ENCODE measurements at regions of chr14 and their contacts with region 1.

Region 1: GRCh38 chr14:74618078-74618952 is 6.3 kb upstream of the LTBP2 start:
- DNase-seq: no peak
- ATAC-seq: no peak
- H3K4me3 ChIP-seq: 0 out of 4 replicates have a peak overlapping the region, but pooled peaks of 1 of the 2 experiments have one; percentile 1
- H3K27ac ChIP-seq: peak overlapping the region; percentile 95
- H3K4me1 ChIP-seq: peaks cover 87% of the 10 kb centered on the region
- H3K27me3 ChIP-seq: no peaks in the 10 kb centered on the region
- CTCF ChIP-seq: no peak

Region 2: GRCh38 chr14:74571901-74572725 is 46.2 kb before region 1 on chr14:
- CTCF ChIA-PET with region 1: no interaction called
- POLR2A ChIA-PET with region 1: no interaction called
- in situ Hi-C with region 1: no loop called
- intact Hi-C with region 1: no loop called
- DNase-seq: peak; percentile 75
- ATAC-seq: peak; percentile 36; the same call in 1 of the 2 replicates
- H3K4me3 ChIP-seq: peak overlapping the region in 1 of 2 experiments; percentile 39; a peak in 2 of 4 replicates
- H3K27ac ChIP-seq: peak overlapping the region; percentile 51
- H3K4me1 ChIP-seq: peaks cover 26% of the 10 kb centered on the region
- H3K27me3 ChIP-seq: no peaks in the 10 kb centered on the region
- CTCF ChIP-seq: no peak

Region 3: GRCh38 chr14:74667758-74668157 is 49.4 kb after region 1 on chr14:
- CTCF ChIA-PET with region 1: no interaction called
- POLR2A ChIA-PET with region 1: interaction called, 10 read pairs
- in situ Hi-C with region 1: no loop called
- intact Hi-C with region 1: no loop called
- DNase-seq: no peak
- ATAC-seq: no peak
- H3K4me3 ChIP-seq: no peak overlapping the region
- H3K27ac ChIP-seq: no peak overlapping the region
- H3K4me1 ChIP-seq: no peaks in the 10 kb centered on the region
- H3K27me3 ChIP-seq: no peaks in the 10 kb centered on the region
- CTCF ChIP-seq: no peak

Region 4: DNA sequence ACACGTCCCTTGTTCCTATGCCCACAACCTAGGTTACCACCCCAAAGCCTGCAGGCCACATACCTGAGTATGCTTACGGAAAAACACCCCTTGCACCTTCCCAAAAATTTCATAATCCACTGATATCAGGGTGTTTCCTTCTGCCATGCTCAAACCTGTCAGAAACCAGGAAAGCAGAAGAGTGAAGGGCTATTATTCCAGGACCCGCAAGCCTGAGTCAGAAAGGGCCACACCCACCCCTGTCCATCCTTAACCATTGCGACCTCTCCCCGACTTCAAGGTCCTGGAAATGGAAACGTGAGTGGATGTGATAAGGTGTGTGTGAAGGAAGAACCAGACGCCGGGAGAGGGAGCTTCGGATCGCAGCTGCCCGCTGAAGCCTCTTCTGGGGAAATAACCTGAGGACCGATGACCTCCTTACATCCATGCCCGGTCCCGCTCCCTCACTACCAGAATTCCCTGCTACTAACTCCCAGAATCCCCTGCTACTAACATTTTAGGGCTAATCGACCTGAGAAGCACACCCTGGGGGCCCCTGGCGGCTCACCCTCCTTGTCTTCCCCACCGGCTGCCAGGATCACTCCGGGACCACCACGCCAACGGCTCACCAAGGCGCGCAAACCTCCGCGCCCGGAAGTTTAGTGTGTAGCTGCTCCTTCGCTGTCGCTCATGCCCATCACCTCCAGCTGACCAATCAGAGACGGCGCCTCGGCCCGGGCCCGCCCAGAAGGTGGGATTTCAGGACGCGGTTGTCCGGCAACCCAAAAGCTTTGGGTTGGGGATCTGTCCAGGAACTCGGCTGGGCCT is 445.3 kb after region 1 on chr14 and contains the start of gene ACYP1:
- CTCF ChIA-PET with region 1: no interaction called
- POLR2A ChIA-PET with region 1: interaction called, 10 read pairs
- in situ Hi-C with region 1: no loop called
- intact Hi-C with region 1: no loop called
- DNase-seq: no peak
- ATAC-seq: peak; percentile 98
- H3K4me3 ChIP-seq: peak within 1 kb of the TSS; percentile 85
- H3K27ac ChIP-seq: peak within 1 kb of the TSS; percentile 92
- H3K4me1 ChIP-seq: peaks cover 12% of the 10 kb centered on the region
- H3K27me3 ChIP-seq: no peaks in the 10 kb centered on the region
- CTCF ChIP-seq: no peak
- total RNA-seq, gene ACYP1: 21.3 TPM

Measured in Panc1 (cell line).